GM12878 (cell line): ENCODE measurements at regions of chr5 and their contacts with region 1.

Region 1: GRCh38 chr5:109688971-109689739 is 572 bp upstream of the MAN2A1 start:
- DNase-seq: peak; percentile 62
- ATAC-seq: peak; percentile 85
- H3K4me3 ChIP-seq: peak overlapping the region; percentile 86
- H3K27ac ChIP-seq: peak overlapping the region; percentile 76
- H3K4me1 ChIP-seq: peaks cover 18% of the 10 kb centered on the region
- H3K27me3 ChIP-seq: no peaks in the 10 kb centered on the region
- CTCF ChIP-seq: peak in 1 of 3 experiments; percentile 7; a peak in 1 of 6 replicates
- EP300 ChIP-seq: no peak
- POLR2A ChIP-seq: peak; percentile 83
- RAD21 ChIP-seq: no peak

Region 2: DNA sequence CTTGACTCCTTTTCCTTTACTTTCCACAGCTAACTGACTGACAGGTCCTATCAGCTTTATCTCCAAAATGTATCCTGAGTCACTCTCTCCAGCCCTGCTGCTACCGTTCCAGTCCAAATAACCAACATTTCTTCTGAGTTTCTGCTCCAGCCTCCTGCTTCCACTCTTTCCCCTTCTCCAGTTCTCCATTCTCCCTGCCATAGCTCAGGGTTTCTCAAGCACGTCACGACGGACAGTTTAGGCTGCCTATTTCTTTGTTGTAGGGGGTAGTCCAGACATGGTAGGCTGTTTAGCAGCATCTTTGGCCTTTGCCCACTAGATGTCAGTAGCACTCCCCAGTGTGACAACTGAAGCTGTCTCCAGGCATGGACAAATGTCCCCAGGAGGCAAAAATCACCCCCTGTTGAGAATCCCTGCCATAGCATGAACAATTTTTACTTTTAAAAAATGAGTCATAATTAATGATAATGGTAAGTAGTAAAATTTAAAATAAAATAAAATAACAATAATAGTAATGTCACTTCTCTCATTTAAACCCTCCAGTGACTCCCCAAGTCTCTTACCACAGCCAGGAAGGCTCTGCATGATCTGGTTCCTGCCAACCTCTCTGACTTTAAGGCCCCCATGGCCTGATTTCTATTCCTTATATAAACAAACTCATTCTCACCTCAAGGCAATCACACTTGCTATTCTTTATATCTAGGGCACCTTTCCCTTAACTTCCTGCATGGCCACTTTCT is 1046.8 kb before region 1 on chr5:
- CTCF ChIA-PET with region 1: no interaction called
- POLR2A ChIA-PET with region 1: no interaction called
- RAD21 ChIA-PET with region 1: no interaction called
- SMC1A ChIA-PET with region 1: no interaction called
- in situ Hi-C with region 1: loop called (anchors 10 kb)
- intact Hi-C with region 1: loop called (anchors 2 kb)
- DNase-seq: peak; percentile 68
- ATAC-seq: peak; percentile 100
- H3K4me3 ChIP-seq: no peak overlapping the region
- H3K27ac ChIP-seq: no peak overlapping the region
- H3K4me1 ChIP-seq: no peaks in the 10 kb centered on the region
- H3K27me3 ChIP-seq: no peaks in the 10 kb centered on the region
- CTCF ChIP-seq: peak; percentile 94 to 96 (median 94); a peak in 5 of 6 replicates
- EP300 ChIP-seq: no peak
- POLR2A ChIP-seq: no peak
- RAD21 ChIP-seq: peak; percentile 98

Region 3: GRCh38 chr5:108919591-108920326 is 769.4 kb before region 1 on chr5:
- CTCF ChIA-PET with region 1: no interaction called
- POLR2A ChIA-PET with region 1: no interaction called
- RAD21 ChIA-PET with region 1: no interaction called
- SMC1A ChIA-PET with region 1: no interaction called
- in situ Hi-C with region 1: no loop called
- intact Hi-C with region 1: loop called (anchors 10 kb)
- DNase-seq: no peak
- ATAC-seq: peak; percentile 70
- H3K4me3 ChIP-seq: no peak overlapping the region
- H3K27ac ChIP-seq: no peak overlapping the region
- H3K4me1 ChIP-seq: no peaks in the 10 kb centered on the region
- H3K27me3 ChIP-seq: no peaks in the 10 kb centered on the region
- CTCF ChIP-seq: peak in 1 of 3 experiments; percentile 14; a peak in 1 of 6 replicates
- EP300 ChIP-seq: no peak
- POLR2A ChIP-seq: no peak
- RAD21 ChIP-seq: peak; percentile 33

Region 4: DNA sequence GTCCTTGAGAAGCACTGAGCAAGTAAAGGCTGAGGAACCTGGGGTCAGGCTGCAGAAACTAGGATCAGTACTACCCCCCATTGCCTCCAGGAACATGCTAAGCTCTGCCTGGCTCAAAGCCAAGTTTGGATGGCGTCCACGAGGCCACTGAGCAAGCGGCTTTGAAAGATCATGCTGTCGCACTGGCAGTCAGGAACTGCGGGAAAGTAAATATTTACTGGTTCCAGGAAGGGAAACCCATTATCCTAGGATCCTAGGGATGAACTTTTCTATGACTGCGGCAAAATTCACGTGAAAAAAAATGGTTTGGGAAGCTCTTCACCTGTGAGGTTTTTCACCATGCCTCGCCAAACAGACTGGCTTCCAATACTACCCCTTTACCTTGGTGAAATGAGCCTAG is 204.1 kb before region 1 on chr5:
- CTCF ChIA-PET with region 1: no interaction called
- POLR2A ChIA-PET with region 1: no interaction called
- RAD21 ChIA-PET with region 1: no interaction called
- SMC1A ChIA-PET with region 1: no interaction called
- in situ Hi-C with region 1: no loop called
- intact Hi-C with region 1: loop called (anchors 5 kb)
- DNase-seq: no peak
- ATAC-seq: no peak
- H3K4me3 ChIP-seq: no peak overlapping the region
- H3K27ac ChIP-seq: no peak overlapping the region
- H3K4me1 ChIP-seq: no peaks in the 10 kb centered on the region
- H3K27me3 ChIP-seq: no peaks in the 10 kb centered on the region
- CTCF ChIP-seq: no peak
- EP300 ChIP-seq: no peak
- POLR2A ChIP-seq: no peak
- RAD21 ChIP-seq: no peak

Region 5: GRCh38 chr5:109788596-109788995 is 99.4 kb after region 1 on chr5:
- CTCF ChIA-PET with region 1: interaction called, 3 read pairs
- POLR2A ChIA-PET with region 1: no interaction called
- RAD21 ChIA-PET with region 1: interaction called, 4 read pairs
- SMC1A ChIA-PET with region 1: interaction called, 3 read pairs
- in situ Hi-C with region 1: no loop called
- intact Hi-C with region 1: loop called (anchors 5 kb)
- DNase-seq: no peak
- ATAC-seq: peak; percentile 94
- H3K4me3 ChIP-seq: 0 out of 2 replicates have a peak overlapping the region, but pooled peaks have one; percentile 13
- H3K27ac ChIP-seq: no peak overlapping the region
- H3K4me1 ChIP-seq: no peaks in the 10 kb centered on the region
- H3K27me3 ChIP-seq: no peaks in the 10 kb centered on the region
- CTCF ChIP-seq: no peak
- EP300 ChIP-seq: no peak
- POLR2A ChIP-seq: no peak
- RAD21 ChIP-seq: no peak